Activated CD8-positive, alpha-beta T cell treated with anti-CD3 and anti-CD28 coated beads for 36 hours (primary cell): ENCODE measurements at regions of chr7 and their contacts with region 1.

Region 1: GRCh38 chr7:100478966-100479665 is at the start of gene TSC22D4:
- DNase-seq: peak; percentile 94
- ATAC-seq: peak; percentile 76
- H3K4me3 Mint-ChIP-seq: peak within 1 kb of the TSS; percentile 94
- H3K27ac Mint-ChIP-seq: peak within 1 kb of the TSS; percentile 95
- H3K4me1 Mint-ChIP-seq: peaks cover 40% of the 10 kb centered on the region
- H3K27me3 Mint-ChIP-seq: no peaks in the 10 kb centered on the region
- CTCF ChIP-seq: no peak
- total RNA-seq, gene TSC22D4: 92.6 to 94.2 TPM

Region 2: GRCh38 chr7:100493476-100494264 is 14.6 kb after region 1 on chr7:
- CTCF ChIA-PET with region 1: interaction called, 17 read pairs
- POLR2A ChIA-PET with region 1: interaction called, 5 read pairs
- intact Hi-C with region 1: no loop called
- DNase-seq: peak; percentile 76
- ATAC-seq: peak; percentile 93
- H3K4me3 Mint-ChIP-seq: peak overlapping the region; percentile 61
- H3K27ac Mint-ChIP-seq: no peak overlapping the region
- H3K4me1 Mint-ChIP-seq: peaks cover 8% of the 10 kb centered on the region
- H3K27me3 Mint-ChIP-seq: no peaks in the 10 kb centered on the region
- CTCF ChIP-seq: no peak

Region 3: GRCh38 chr7:100532165-100533022 is 53.3 kb after region 1 on chr7:
- CTCF ChIA-PET with region 1: interaction called, 11 read pairs
- POLR2A ChIA-PET with region 1: no interaction called
- intact Hi-C with region 1: no loop called
- DNase-seq: no peak
- ATAC-seq: no peak
- H3K4me3 Mint-ChIP-seq: no peak overlapping the region
- H3K27ac Mint-ChIP-seq: no peak overlapping the region
- H3K4me1 Mint-ChIP-seq: peaks cover 8% of the 10 kb centered on the region
- H3K27me3 Mint-ChIP-seq: no peaks in the 10 kb centered on the region
- CTCF ChIP-seq: no peak

Region 4: GRCh38 chr7:100545360-100546128 is 66.4 kb after region 1 on chr7:
- CTCF ChIA-PET with region 1: interaction called, 75 read pairs
- POLR2A ChIA-PET with region 1: interaction called, 7 read pairs
- intact Hi-C with region 1: loop called (anchors 5 kb)
- DNase-seq: peak; percentile 87
- ATAC-seq: peak; percentile 79
- H3K4me3 Mint-ChIP-seq: peak overlapping the region; percentile 91
- H3K27ac Mint-ChIP-seq: peak overlapping the region; percentile 99
- H3K4me1 Mint-ChIP-seq: peaks cover 90% of the 10 kb centered on the region
- H3K27me3 Mint-ChIP-seq: no peaks in the 10 kb centered on the region
- CTCF ChIP-seq: no peak

Region 5: GRCh38 chr7:100789055-100789454 is 309.9 kb after region 1 on chr7:
- CTCF ChIA-PET with region 1: no interaction called
- POLR2A ChIA-PET with region 1: no interaction called
- intact Hi-C with region 1: no loop called
- DNase-seq: no peak
- ATAC-seq: no peak
- H3K4me3 Mint-ChIP-seq: no peak overlapping the region
- H3K27ac Mint-ChIP-seq: no peak overlapping the region
- H3K4me1 Mint-ChIP-seq: peaks cover 2% of the 10 kb centered on the region
- H3K27me3 Mint-ChIP-seq: peaks cover 3% of the 10 kb centered on the region
- CTCF ChIP-seq: no peak